ENCODE measurements at regions of chr2 and their contacts with region 1.

Region 1: DNA sequence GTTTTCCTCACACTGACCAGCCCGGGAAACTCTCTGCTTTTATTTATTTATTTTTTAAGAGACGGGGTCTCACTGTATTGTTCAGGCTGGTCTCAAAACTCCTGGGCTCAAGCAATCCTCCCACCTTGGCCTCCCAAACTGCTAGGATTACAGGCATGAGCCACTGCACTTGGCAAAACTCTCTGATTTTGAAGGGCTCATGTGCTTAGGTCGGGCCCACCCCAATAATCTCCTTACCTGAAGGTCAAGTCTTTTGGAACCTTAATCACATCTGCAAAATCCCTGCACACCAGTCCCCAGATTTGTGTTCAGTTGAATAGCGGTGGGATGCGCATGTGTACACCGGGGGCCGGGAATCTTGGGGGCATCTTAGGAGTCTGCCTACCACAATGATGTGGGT is 7.7 kb upstream of the ECEL1 start:
- DNase-seq: no peak
- H3K4me3 ChIP-seq: no peak overlapping the region
- H3K27ac ChIP-seq: no peak overlapping the region
- H3K4me1 ChIP-seq: no peaks in the 10 kb centered on the region
- H3K27me3 ChIP-seq: no peaks in the 10 kb centered on the region
- CTCF ChIP-seq: no peak

Region 2: DNA sequence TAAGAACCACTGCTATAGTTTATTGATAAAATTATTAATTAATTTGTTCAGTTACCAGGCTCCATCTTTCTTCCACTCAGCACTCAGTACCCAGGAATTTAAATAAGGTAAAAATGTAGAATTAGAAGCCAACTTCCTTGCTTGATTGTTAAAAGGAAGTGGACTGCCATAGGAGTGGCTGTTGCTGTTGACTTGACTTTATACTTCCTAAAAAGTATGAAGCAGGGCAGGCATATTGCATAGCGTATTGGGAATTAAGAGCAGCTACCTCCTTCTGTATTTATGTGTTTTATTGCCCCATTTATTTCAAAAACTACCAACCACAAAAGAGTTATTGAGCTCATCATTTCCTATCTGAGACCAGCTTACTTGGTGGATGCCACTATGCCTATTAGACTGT is 1410.7 kb before region 1 on chr2:
- CTCF ChIA-PET with region 1: no interaction called
- POLR2A ChIA-PET with region 1: interaction called, 12 read pairs
- intact Hi-C with region 1: no loop called
- DNase-seq: no peak
- H3K4me3 ChIP-seq: no peak overlapping the region
- H3K27ac ChIP-seq: no peak overlapping the region
- H3K4me1 ChIP-seq: no peaks in the 10 kb centered on the region
- H3K27me3 ChIP-seq: no peaks in the 10 kb centered on the region
- CTCF ChIP-seq: no peak

Region 3: GRCh38 chr2:232444409-232445148 is 50.7 kb before region 1 on chr2:
- CTCF ChIA-PET with region 1: no interaction called
- POLR2A ChIA-PET with region 1: no interaction called
- intact Hi-C with region 1: no loop called
- DNase-seq: peak; percentile 86
- H3K4me3 ChIP-seq: no peak overlapping the region
- H3K27ac ChIP-seq: no peak overlapping the region
- H3K4me1 ChIP-seq: no peaks in the 10 kb centered on the region
- H3K27me3 ChIP-seq: no peaks in the 10 kb centered on the region
- CTCF ChIP-seq: peak; percentile 78